K562 (cell line): ENCODE measurements at regions of chr7 and their contacts with region 1.

Region 1: GRCh38 chr7:97499204-97499603 is 232.7 kb upstream of the TAC1 start:
- DNase-seq: peak; percentile 31 to 58 (median 44)
- ATAC-seq: peak; percentile 93
- H3K4me3 ChIP-seq: no peak overlapping the region
- H3K27ac ChIP-seq: no peak overlapping the region
- H3K4me1 ChIP-seq: no peaks in the 10 kb centered on the region
- H3K27me3 ChIP-seq: no peaks in the 10 kb centered on the region
- CTCF ChIP-seq: peak; percentile 55 to 80 (median 63)
- EP300 ChIP-seq: no peak
- POLR2A ChIP-seq: no peak
- RAD21 ChIP-seq: peak; percentile 62 to 64

Region 2: GRCh38 chr7:97845622-97846203 is 346.5 kb after region 1 on chr7:
- CTCF ChIA-PET with region 1: interaction called, 5 read pairs
- POLR2A ChIA-PET with region 1: no interaction called
- in situ Hi-C with region 1: no loop called
- intact Hi-C with region 1: loop called (anchors 2 kb)
- DNase-seq: peak in 2 of 4 experiments; percentile 19 to 47
- ATAC-seq: peak; percentile 59
- H3K4me3 ChIP-seq: no peak overlapping the region
- H3K27ac ChIP-seq: no peak overlapping the region
- H3K4me1 ChIP-seq: no peaks in the 10 kb centered on the region; a peak in 1 of 5 replicates
- H3K27me3 ChIP-seq: no peaks in the 10 kb centered on the region
- CTCF ChIP-seq: peak; percentile 27 to 65 (median 36); a peak in 3 of 6 replicates
- EP300 ChIP-seq: no peak
- POLR2A ChIP-seq: no peak
- RAD21 ChIP-seq: peak; percentile 49 to 62

Region 3: GRCh38 chr7:98014352-98014751 is 515.1 kb after region 1 on chr7:
- CTCF ChIA-PET with region 1: no interaction called
- POLR2A ChIA-PET with region 1: no interaction called
- in situ Hi-C with region 1: no loop called
- intact Hi-C with region 1: loop called (anchors 10 kb)
- DNase-seq: no peak
- ATAC-seq: no peak
- H3K4me3 ChIP-seq: no peak overlapping the region
- H3K27ac ChIP-seq: no peak overlapping the region
- H3K4me1 ChIP-seq: peaks cover 0 to 2% of the 10 kb centered on the region in 2 experiments; a peak in 2 of 5 replicates
- H3K27me3 ChIP-seq: peaks cover 3 to 27% of the 10 kb centered on the region in 2 experiments; a peak in 2 of 5 replicates
- CTCF ChIP-seq: no peak
- EP300 ChIP-seq: no peak
- POLR2A ChIP-seq: no peak
- RAD21 ChIP-seq: no peak